ENCODE measurements at regions of chr12 and their contacts with region 1.

Region 1: DNA sequence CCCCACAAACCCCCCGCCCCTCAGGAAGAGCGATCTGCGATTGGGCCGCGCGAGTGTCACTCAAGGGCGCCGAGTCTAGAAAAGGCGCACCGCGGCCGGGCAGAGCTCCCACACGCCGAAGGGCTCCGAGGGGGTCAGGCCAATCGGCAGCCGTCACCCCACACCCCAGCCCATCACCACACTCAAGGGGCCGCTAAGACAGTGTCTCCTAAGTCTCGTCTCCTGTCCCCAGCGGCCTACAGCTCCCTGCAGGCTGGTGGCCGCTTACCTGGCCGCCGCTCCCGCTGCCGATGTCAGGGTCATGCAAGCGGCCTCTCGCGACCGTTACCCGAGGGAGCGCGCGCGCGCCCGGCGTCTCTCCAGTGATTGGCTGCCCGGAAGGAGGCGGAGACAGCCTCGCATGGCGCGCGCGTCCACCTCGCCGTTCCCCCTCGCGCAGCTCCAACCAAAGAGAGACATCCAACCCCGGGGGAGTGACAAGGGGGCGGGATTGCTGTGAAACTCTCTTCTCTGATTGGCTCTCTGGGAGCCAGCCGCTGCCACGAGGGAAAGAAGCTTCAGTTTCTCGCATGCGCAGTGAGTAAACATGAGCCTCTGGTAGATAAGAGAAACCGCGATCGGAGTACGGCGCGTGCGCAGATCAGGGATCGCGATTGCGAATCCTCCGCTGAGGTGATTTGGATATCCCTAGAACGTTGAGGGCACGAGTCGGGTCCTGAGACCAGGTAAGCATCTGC is at the starts of genes MPHOSPH9 and MTRFR:
- DNase-seq: peak; percentile 100
- H3K4me3 ChIP-seq: peak within 1 kb of the TSS; percentile 86
- H3K27ac ChIP-seq: peak within 1 kb of the TSS; percentile 88
- H3K4me1 ChIP-seq: peaks cover 29% of the 10 kb centered on the region
- H3K27me3 ChIP-seq: no peaks in the 10 kb centered on the region
- CTCF ChIP-seq: no peak
- total RNA-seq, gene MPHOSPH9: 80.8 and 95.7 TPM in 2 replicates
- total RNA-seq, gene MTRFR: 21.9 and 26.3 TPM in 2 replicates

Region 2: DNA sequence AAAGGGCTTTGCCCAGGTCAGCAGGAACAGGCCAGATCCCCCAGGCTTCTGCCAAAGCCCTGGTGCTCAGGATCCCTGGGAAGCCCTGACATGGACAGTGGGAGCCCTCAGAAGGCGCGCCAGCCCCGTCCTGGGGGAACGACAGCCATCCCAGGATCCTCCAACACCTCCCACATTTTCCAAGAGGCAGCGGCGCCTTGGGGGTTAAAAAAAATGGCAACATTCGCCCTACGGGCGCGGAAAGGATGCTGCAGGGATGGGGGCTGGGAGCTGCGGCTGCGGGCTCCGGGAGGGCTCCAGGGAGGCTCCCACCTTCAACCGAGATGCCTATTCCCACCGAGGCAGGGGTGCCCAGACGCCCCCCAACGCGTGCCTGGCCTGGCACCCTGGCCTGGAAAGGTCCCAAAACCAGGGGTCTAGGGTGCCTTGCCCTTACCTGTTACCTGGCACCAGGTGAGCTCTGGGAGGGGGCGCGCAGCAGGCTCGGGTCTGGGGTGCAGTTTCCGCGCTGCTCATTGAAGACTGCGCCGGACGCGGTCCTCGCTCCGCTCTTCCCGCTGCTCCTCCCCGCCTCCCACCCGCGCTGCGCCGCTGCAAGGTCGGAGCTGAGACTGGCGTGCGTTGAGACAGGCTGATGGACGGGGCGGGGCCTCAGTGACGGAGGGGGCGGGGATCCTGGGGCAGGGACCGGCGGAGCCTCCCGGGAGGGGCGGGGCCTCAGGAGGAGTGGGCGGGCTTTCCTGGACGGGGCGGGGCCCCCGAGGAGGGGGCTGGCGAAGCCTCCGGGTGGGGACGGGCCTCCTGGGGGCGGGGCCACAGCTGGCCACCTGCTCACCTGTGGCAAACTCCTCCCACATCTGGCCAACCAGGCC is 266.9 kb before region 1 on chr12 and contains the start of gene ABCB9:
- CTCF ChIA-PET with region 1: no interaction called
- POLR2A ChIA-PET with region 1: no interaction called
- intact Hi-C with region 1: loop called (anchors 5 kb)
- DNase-seq: peak; percentile 97
- H3K4me3 ChIP-seq: peak within 1 kb of the TSS; percentile 58
- H3K27ac ChIP-seq: peak within 1 kb of the TSS; percentile 51
- H3K4me1 ChIP-seq: peaks cover 12% of the 10 kb centered on the region
- H3K27me3 ChIP-seq: no peaks in the 10 kb centered on the region
- CTCF ChIP-seq: no peak
- total RNA-seq, gene ABCB9: 8.9 and 10.6 TPM in 2 replicates

Region 3: GRCh38 chr12:123043536-123044001 is 189.4 kb before region 1 on chr12:
- CTCF ChIA-PET with region 1: no interaction called
- POLR2A ChIA-PET with region 1: no interaction called
- intact Hi-C with region 1: loop called (anchors 5 kb)
- DNase-seq: peak; percentile 59
- H3K4me3 ChIP-seq: no peak overlapping the region
- H3K27ac ChIP-seq: no peak overlapping the region
- H3K4me1 ChIP-seq: peaks cover 10% of the 10 kb centered on the region
- H3K27me3 ChIP-seq: no peaks in the 10 kb centered on the region
- CTCF ChIP-seq: peak; percentile 65

Region 4: DNA sequence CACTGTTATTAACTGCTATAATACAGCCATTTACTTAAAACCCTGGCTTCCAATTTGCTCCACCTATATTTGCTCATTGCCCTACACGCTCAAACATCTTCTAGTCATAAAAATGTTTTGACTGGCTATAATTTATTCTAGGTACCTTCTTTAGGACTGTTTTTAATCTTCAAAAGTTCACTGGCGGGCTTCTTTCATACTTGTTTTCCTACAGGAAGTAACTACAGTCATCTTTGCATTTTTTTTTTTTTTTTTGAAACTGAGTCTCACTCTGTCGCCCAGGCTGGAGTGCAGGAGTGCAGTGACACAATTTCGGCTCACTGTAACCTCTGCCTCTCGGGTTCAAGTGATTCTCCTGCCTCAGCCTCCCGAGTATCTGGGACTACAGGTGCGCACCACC is 32.6 kb before region 1 on chr12:
- CTCF ChIA-PET with region 1: interaction called, 11 read pairs
- POLR2A ChIA-PET with region 1: no interaction called
- intact Hi-C with region 1: no loop called
- DNase-seq: no peak
- H3K4me3 ChIP-seq: no peak overlapping the region
- H3K27ac ChIP-seq: no peak overlapping the region
- H3K4me1 ChIP-seq: no peaks in the 10 kb centered on the region
- H3K27me3 ChIP-seq: no peaks in the 10 kb centered on the region
- CTCF ChIP-seq: no peak

Region 5: DNA sequence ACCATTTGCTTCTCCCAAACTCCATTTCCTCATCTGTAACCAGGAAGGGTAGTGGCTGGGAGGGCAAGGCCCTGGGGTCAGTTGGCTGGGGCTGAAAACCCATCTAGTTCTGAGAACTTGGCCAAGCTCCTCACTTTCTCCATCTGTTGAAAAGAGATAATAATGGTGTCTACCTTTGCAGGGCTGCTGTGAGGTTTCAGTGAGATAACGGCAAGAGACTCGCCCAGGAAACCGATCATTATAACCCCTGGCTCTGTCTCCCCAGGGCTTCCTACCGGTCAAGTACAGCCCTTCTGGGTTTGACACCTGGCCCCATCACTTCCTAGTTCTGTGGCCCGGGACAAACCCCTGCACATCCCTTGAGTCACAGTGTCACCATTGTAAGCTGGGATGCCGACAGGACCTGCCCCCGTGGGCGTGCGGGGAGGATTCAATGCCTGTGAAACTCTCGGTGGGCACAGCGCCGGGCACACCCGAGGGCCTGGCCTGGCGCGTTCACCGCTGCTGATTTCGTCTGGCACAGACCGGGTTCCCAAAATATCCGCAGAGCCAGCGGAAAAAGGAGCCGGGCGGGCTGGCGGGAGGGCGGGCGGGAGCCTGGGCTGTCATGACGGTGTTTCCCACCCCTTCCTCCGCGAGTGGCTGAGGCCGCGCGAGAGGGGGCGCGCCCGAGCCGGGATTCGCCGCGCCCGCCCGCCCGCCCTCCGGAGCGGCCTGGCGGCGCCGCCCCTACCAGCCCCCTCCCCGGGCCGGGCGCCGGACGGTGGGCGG is 155.4 kb after region 1 on chr12:
- CTCF ChIA-PET with region 1: no interaction called
- POLR2A ChIA-PET with region 1: no interaction called
- intact Hi-C with region 1: loop called (anchors 2 kb)
- DNase-seq: peak; percentile 85
- H3K4me3 ChIP-seq: peak overlapping the region; percentile 61
- H3K27ac ChIP-seq: peak overlapping the region; percentile 77
- H3K4me1 ChIP-seq: peaks cover 18% of the 10 kb centered on the region
- H3K27me3 ChIP-seq: no peaks in the 10 kb centered on the region
- CTCF ChIP-seq: no peak

Region 6: DNA sequence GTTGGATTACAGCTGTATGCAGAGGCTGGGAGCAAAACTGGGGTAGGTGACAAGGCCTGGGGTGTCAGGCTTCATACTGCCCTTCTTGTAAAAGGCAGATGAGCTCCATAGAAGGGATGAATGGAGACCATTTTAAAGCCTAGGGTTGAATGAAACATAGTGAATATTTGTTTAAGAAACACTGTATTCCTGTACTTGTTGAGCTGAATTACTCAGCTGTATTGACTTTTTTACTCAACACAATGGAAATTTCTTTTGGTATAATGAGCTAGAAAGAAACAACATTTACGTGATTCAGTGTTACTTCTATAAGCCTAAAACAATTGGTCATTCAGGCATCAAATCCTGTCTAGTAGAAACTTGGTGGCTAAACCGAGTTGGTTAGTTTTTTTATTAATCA is 493.3 kb after region 1 on chr12:
- CTCF ChIA-PET with region 1: no interaction called
- POLR2A ChIA-PET with region 1: no interaction called
- intact Hi-C with region 1: no loop called
- DNase-seq: no peak
- H3K4me3 ChIP-seq: no peak overlapping the region
- H3K27ac ChIP-seq: no peak overlapping the region
- H3K4me1 ChIP-seq: no peaks in the 10 kb centered on the region
- H3K27me3 ChIP-seq: no peaks in the 10 kb centered on the region
- CTCF ChIP-seq: no peak